Activated CD4-positive, alpha-beta T cell treated with anti-CD3 and anti-CD28 coated beads for 36 hours (primary cell): ENCODE measurements at regions of chr19 and their contacts with region 1.

Region 1: GRCh38 chr19:14419106-14419813 is at the start of gene DDX39A:
- DNase-seq: peak; percentile 99
- ATAC-seq: peak; percentile 95
- H3K4me3 Mint-ChIP-seq: peak within 1 kb of the TSS; percentile 82
- H3K27ac Mint-ChIP-seq: peak within 1 kb of the TSS; percentile 92
- H3K4me1 Mint-ChIP-seq: peaks cover 29% of the 10 kb centered on the region
- H3K27me3 Mint-ChIP-seq: no peaks in the 10 kb centered on the region
- total RNA-seq, gene DDX39A: 168 to 185 TPM

Region 2: GRCh38 chr19:14091081-14091812 is 328.0 kb before region 1 on chr19:
- CTCF ChIA-PET with region 1: no interaction called
- POLR2A ChIA-PET with region 1: no interaction called
- intact Hi-C with region 1: loop called in 1 of 2 experiments (anchors 2 kb)
- DNase-seq: peak; percentile 76
- ATAC-seq: peak; percentile 75
- H3K4me3 Mint-ChIP-seq: peak overlapping the region; percentile 81
- H3K27ac Mint-ChIP-seq: peak overlapping the region; percentile 98
- H3K4me1 Mint-ChIP-seq: peaks cover 20% of the 10 kb centered on the region
- H3K27me3 Mint-ChIP-seq: no peaks in the 10 kb centered on the region

Region 3: GRCh38 chr19:14325863-14326262 is 93.4 kb before region 1 on chr19:
- CTCF ChIA-PET with region 1: no interaction called
- POLR2A ChIA-PET with region 1: no interaction called
- intact Hi-C with region 1: no loop called
- DNase-seq: no peak
- ATAC-seq: no peak
- H3K4me3 Mint-ChIP-seq: no peak overlapping the region
- H3K27ac Mint-ChIP-seq: no peak overlapping the region
- H3K4me1 Mint-ChIP-seq: no peaks in the 10 kb centered on the region
- H3K27me3 Mint-ChIP-seq: no peaks in the 10 kb centered on the region

Region 4: GRCh38 chr19:14366498-14366915 is 52.8 kb before region 1 on chr19:
- CTCF ChIA-PET with region 1: no interaction called
- POLR2A ChIA-PET with region 1: interaction called, 4 read pairs
- intact Hi-C with region 1: loop called (anchors 1 kb)
- DNase-seq: peak; percentile 95
- ATAC-seq: peak; percentile 50
- H3K4me3 Mint-ChIP-seq: peak overlapping the region; percentile 45
- H3K27ac Mint-ChIP-seq: peak overlapping the region; percentile 100
- H3K4me1 Mint-ChIP-seq: peaks cover 78% of the 10 kb centered on the region
- H3K27me3 Mint-ChIP-seq: no peaks in the 10 kb centered on the region

Region 5: DNA sequence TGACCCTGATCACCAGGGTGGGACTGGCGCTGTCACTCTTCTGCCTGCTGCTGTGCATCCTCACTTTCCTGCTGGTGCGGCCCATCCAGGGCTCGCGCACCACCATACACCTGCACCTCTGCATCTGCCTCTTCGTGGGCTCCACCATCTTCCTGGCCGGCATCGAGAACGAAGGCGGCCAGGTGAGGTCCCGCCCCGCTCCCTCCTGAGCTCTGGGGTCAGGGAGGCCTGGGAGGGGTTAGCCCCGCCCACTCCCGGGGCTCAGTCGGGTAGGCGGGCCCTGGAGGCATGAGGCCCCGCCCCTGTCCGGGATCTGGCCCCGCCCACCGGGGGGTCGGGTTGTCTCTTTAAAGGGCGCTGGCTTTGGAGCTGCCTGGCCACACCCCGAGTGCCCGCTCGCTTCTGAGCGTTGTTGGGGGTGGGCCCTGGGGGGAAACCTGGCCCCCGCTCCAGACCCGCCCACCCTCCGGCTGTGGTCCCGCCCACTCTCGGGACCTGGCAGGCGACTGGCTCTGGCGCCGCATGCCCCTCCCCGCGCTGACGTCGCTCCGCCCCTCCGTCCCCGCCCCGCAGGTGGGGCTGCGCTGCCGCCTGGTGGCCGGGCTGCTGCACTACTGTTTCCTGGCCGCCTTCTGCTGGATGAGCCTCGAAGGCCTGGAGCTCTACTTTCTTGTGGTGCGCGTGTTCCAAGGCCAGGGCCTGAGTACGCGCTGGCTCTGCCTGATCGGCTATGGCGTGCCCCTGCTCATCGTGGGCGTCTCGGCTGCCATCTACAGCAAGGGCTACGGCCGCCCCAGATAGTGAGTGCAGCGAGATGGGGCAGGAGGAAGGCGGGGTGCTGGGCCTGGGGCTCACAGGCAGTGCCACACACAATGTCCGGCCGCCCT is 13.3 kb before region 1 on chr19:
- CTCF ChIA-PET with region 1: interaction called, 11 read pairs
- POLR2A ChIA-PET with region 1: interaction called, 11 read pairs
- intact Hi-C with region 1: loop called in 1 of 2 experiments (anchors 1 kb)
- DNase-seq: peak; percentile 96
- ATAC-seq: peak; percentile 78
- H3K4me3 Mint-ChIP-seq: peak overlapping the region; percentile 12
- H3K27ac Mint-ChIP-seq: no peak overlapping the region
- H3K4me1 Mint-ChIP-seq: peaks cover 16% of the 10 kb centered on the region
- H3K27me3 Mint-ChIP-seq: no peaks in the 10 kb centered on the region

Region 6: DNA sequence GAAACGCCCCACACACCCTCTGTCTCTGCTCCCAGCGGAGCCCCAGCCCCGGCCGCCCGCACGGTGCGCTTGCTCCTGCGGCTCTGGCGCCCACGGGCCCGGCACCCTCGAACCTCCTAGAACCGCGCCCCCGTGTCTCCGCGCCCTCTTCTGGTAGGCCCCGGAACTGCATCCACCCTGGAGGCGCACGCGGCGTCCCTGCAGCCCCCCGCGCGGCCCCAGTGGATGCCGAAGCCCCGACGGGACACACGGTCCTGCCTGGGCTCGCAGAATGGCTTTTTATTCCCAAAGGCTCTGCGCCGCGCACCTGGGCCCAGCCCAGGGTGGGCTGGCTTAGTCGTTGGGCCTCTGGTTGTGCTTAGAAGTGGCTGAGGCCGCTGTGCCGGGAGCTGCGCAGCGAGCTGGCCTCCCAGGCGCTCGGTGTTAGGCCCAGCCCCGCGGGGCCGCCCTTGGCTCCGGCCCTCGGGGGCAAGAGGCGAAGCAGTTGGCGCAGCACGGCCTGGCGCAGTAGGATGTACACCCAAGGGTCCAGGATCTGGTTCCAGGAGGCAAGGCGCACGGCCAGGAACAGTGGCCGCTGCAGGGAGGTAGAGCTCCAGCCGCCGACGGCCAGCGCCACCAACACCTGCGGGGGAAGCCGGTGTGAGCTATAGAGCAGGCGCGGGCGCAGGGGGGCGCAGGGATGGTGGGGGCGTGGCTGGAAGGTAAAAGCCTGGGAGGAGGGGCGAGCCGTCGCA is 53.1 kb after region 1 on chr19:
- CTCF ChIA-PET with region 1: no interaction called
- POLR2A ChIA-PET with region 1: no interaction called
- intact Hi-C with region 1: loop called (anchors 2 to 10 kb)
- DNase-seq: peak; percentile 93
- ATAC-seq: peak; percentile 56
- H3K4me3 Mint-ChIP-seq: no peak overlapping the region
- H3K27ac Mint-ChIP-seq: no peak overlapping the region
- H3K4me1 Mint-ChIP-seq: peaks cover 32% of the 10 kb centered on the region
- H3K27me3 Mint-ChIP-seq: peaks cover 16% of the 10 kb centered on the region

Region 7: DNA sequence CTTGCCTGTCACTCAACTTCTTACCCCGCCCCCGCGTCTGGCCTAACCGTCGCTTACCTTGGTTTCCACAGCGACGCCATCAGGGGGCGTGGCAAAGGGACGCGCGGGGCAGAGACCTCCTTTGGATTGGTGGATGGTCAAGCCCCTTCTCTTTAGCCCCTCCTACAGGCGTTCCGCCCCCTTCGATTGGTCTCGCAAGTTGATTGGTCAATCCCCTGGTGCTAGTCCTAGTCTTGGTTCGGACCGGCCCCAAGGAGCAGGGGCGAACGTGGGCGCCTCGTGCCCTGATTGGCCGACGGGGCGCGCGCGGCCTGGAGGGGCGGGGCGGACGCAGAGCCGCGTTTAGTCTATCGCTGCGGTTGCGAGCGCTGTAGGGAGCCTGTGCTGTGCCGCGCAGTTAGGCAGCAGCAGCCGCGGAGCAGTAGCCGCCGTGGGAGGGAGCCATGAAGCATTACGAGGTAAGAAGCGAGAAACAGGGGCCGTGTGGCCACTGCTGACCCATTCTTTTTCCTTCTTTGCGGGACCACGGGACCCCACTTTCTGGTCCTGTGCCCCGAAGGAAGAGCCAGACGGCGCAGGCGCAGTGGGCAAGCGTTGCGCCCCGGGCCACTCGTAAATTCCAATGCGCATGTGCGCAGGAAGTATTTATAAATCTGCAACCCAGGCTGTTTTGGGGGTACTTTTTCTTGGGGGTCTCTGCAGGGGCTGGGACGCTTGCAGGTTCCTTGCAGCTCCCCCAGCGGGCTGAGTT is 110.2 kb after region 1 on chr19 and contains the start of gene TECR:
- CTCF ChIA-PET with region 1: no interaction called
- POLR2A ChIA-PET with region 1: no interaction called
- intact Hi-C with region 1: loop called in 1 of 2 experiments (anchors 1 kb)
- DNase-seq: peak; percentile 100
- ATAC-seq: peak; percentile 98
- H3K4me3 Mint-ChIP-seq: peak within 1 kb of the TSS; percentile 83
- H3K27ac Mint-ChIP-seq: peak within 1 kb of the TSS; percentile 90
- H3K4me1 Mint-ChIP-seq: peaks cover 37% of the 10 kb centered on the region
- H3K27me3 Mint-ChIP-seq: no peaks in the 10 kb centered on the region
- total RNA-seq, gene TECR: 106 to 145 TPM

Region 8: DNA sequence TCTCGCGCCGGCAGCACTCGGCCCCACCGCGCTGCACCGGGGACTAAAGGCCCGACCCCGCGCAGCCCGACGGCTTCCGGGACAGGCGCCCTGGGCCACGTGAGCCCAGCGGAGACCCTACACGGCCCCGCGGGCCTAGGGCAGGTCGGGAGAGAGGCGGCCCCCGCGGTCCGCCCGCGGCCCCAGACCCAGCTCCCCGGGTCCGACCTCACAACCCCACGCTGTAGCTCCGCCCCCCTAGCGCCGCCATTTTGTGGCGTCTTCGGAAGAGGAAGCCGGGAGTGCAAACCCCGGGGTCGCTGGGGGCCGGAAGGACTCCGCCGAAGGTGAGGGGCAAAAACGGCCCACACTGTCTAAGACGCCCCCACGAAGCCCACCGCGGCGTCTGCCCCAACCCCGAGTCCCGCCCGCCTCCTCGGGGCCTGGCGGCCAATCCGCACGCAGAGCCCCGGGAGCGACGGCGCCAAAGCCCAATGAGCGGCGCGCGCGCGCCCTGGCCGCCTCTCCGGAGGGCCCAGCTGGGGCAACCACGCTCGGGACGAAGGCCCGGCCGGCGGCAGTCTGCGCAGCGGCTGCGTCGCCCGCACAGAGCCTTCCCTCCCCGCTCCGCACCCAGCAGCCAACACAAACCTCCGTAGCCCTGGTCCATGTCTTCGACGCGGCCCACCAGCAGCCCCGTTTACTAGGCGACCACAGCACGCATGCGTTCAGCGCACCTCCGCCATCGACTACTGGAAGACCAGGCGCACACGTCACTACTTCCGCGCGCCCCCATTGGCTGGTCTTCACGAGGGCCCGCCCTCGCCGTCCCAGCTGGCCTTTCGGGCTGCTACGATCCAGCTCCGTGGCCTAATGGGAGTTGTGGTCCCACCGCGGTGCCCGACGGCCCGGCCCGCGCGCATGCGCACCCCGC is 960.1 kb after region 1 on chr19 and contains the start of gene AKAP8:
- CTCF ChIA-PET with region 1: no interaction called
- POLR2A ChIA-PET with region 1: no interaction called
- intact Hi-C with region 1: loop called in 1 of 2 experiments (anchors 2 kb)
- DNase-seq: peak; percentile 99
- ATAC-seq: peak; percentile 91
- H3K4me3 Mint-ChIP-seq: peak within 1 kb of the TSS; percentile 88
- H3K27ac Mint-ChIP-seq: peak within 1 kb of the TSS; percentile 100
- H3K4me1 Mint-ChIP-seq: peaks cover 37% of the 10 kb centered on the region
- H3K27me3 Mint-ChIP-seq: no peaks in the 10 kb centered on the region
- total RNA-seq, gene AKAP8: 47.9 to 54.3 TPM